Right cardiac atrium (tissue), 5 donors: ENCODE measurements at regions of chr4 and their contacts with region 1.

Region 1: GRCh38 chr4:18934197-18934596 is 912.6 kb upstream of the LCORL start:
- DNase-seq: no peak
- ATAC-seq: no peak
- H3K4me3 ChIP-seq: no peak overlapping the region
- H3K27ac ChIP-seq: no peak overlapping the region
- H3K4me1 ChIP-seq: no peaks in the 10 kb centered on the region
- H3K27me3 ChIP-seq: no peaks in the 10 kb centered on the region

Region 2: DNA sequence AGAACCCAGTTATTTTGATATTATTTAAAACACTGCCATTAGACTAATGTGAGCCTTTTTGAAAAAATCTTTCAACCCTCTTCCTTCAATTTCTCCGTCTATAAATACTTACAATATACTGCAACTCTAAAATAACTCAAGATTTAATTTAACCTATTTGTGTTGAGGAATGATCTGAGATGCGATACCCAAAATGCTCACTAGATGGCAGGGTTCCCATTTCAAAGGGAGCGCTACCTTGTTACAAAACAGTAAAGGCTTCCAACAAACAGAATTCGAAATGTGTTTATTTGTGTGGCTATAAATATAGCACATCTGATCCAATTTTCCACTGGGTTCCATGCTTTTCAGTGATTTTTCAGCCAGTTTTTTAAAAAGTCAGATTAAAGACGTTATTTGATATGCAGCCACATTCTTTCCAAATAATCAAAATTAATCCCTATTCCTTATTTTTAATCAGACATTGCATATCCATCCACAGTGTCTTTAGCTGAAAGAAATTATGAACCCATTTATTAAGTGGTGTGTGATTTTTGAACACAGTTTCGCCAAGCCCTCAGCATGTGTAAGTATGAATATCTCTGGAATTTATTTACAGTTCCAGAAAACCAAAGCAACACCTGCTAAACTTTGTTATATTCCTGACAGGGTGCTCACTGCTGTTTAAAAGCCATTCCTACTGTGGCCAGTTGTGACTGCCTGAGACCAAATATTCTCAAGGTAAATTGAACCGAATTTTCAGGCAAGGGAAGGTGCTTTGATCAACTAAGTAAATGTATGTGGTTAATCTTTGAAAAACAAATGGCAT is 244.7 kb before region 1 on chr4:
- intact Hi-C with region 1: loop called (anchors 5 to 10 kb)
- DNase-seq: no peak
- ATAC-seq: no peak
- H3K4me3 ChIP-seq: no peak overlapping the region
- H3K27ac ChIP-seq: no peak overlapping the region
- H3K4me1 ChIP-seq: no peaks in the 10 kb centered on the region
- H3K27me3 ChIP-seq: no peaks in the 10 kb centered on the region

Region 3: DNA sequence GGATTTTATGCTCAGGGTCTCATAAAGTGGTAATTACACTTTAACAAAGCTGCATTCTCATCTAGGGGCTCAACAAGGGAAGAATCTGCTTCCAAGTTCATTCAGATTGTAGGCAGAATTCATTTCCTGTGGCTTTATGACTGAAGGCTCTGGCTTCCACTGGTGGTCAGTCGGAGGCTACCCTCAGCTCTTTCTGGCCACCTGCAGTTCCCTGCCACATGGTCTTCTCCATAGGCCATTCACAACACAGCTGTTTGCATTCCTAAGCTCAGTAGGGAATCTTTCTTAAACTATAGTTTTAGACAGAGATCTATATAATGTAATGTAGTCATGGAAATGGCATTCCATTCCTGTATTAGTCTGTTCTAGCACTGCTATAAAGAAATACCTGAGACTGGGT is 344.5 kb after region 1 on chr4:
- intact Hi-C with region 1: no loop called
- DNase-seq: no peak
- ATAC-seq: no peak
- H3K4me3 ChIP-seq: no peak overlapping the region
- H3K27ac ChIP-seq: no peak overlapping the region
- H3K4me1 ChIP-seq: no peaks in the 10 kb centered on the region
- H3K27me3 ChIP-seq: no peaks in the 10 kb centered on the region